Activated T-helper 2 cell treated with anti-CD3 and anti-CD28 coated beads, Interferon-gamma antibody, Interleukin-2, Interleukin-4, amounts not matched to agents 10 μg/mL and 5 μg/mL and 100 μg/mL, durations not matched to agents 14 hours and 24 hours and 36 hours (primary cell): ENCODE measurements at regions of chr12 and their contacts with region 1.

Region 1: GRCh38 chr12:92034858-92035401 is 110.7 kb downstream of the BTG1 start:
- DNase-seq: peak; percentile 35
- H3K4me3 Mint-ChIP-seq: peak overlapping the region; percentile 82
- H3K27ac Mint-ChIP-seq: peak overlapping the region; percentile 90
- H3K4me1 Mint-ChIP-seq: peaks cover 69% of the 10 kb centered on the region
- H3K27me3 Mint-ChIP-seq: no peaks in the 10 kb centered on the region

Region 2: GRCh38 chr12:91561958-91562875 is 472.7 kb before region 1 on chr12:
- intact Hi-C with region 1: loop called (anchors 10 kb)
- DNase-seq: no peak
- H3K4me3 Mint-ChIP-seq: no peak overlapping the region
- H3K27ac Mint-ChIP-seq: no peak overlapping the region
- H3K4me1 Mint-ChIP-seq: peaks cover 35% of the 10 kb centered on the region
- H3K27me3 Mint-ChIP-seq: no peaks in the 10 kb centered on the region

Region 3: GRCh38 chr12:91687052-91688017 is 347.6 kb before region 1 on chr12:
- intact Hi-C with region 1: loop called (anchors 10 kb)
- DNase-seq: no peak
- H3K4me3 Mint-ChIP-seq: no peak overlapping the region
- H3K27ac Mint-ChIP-seq: peak overlapping the region; percentile 66
- H3K4me1 Mint-ChIP-seq: peaks cover 24% of the 10 kb centered on the region
- H3K27me3 Mint-ChIP-seq: no peaks in the 10 kb centered on the region

Region 4: DNA sequence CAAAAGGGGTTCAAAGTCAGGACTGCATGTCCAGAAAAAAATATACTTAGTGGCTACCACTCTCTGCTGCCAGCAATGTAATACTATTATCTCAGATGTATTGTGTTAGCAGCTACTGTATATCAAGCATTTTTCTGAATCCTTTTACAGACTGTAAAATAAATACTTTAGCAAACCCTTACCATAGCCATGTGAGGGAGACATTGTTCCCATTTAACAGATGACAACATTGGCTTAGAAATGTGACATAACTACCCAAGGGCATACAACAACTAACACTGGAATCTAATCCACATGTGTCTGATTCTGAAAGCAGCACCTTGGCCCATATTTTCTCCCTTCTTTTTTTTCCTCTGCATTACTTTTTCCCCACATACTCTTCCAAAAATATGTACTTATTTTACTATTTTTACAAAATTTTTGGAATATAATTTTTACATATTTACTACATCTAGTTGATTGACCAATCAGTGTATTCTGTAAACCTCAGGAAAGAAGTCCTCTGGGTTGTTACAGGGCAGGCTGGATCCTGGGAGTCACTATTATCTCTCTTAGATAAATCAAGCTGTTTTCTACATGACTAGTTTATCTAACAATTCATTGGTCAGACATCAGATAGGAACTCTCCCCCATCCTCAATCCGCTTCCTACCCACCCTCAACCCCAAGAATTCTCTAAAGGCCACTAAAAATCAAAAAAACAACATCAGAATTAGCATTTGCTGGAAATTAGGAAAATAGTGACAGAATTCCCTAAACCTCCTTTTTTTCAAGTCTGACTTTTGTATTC is 43.3 kb before region 1 on chr12:
- intact Hi-C with region 1: loop called (anchors 5 kb)
- DNase-seq: no peak
- H3K4me3 Mint-ChIP-seq: no peak overlapping the region
- H3K27ac Mint-ChIP-seq: no peak overlapping the region
- H3K4me1 Mint-ChIP-seq: peaks cover 4% of the 10 kb centered on the region
- H3K27me3 Mint-ChIP-seq: no peaks in the 10 kb centered on the region

Region 5: DNA sequence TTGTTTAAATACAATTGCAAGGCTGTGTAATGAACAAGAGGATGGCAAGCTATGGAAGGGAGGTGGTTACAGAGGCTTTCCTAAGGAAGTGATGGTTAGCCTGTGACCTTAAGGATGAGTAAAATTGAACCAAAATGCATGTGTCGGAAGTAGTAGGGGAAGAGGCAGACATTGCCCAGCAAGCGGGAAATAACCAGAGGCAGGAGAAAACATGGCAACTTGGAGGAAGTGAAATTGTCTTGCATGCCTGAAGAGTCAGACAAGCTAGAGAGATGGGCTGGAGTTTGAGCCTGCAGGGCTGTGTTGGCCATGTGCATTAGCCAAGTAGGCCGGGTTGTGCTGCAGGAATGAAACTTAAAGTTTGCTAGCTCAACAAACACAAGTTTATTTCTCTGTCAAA is 14.5 kb after region 1 on chr12:
- intact Hi-C with region 1: loop called (anchors 1 kb)
- DNase-seq: no peak
- H3K4me3 Mint-ChIP-seq: no peak overlapping the region
- H3K27ac Mint-ChIP-seq: no peak overlapping the region
- H3K4me1 Mint-ChIP-seq: peaks cover 71% of the 10 kb centered on the region
- H3K27me3 Mint-ChIP-seq: no peaks in the 10 kb centered on the region

Region 6: GRCh38 chr12:92136965-92137721 is 102.2 kb after region 1 on chr12:
- intact Hi-C with region 1: loop called (anchors 2 kb)
- DNase-seq: no peak
- H3K4me3 Mint-ChIP-seq: peak overlapping the region; percentile 98
- H3K27ac Mint-ChIP-seq: peak overlapping the region; percentile 87
- H3K4me1 Mint-ChIP-seq: peaks cover 78% of the 10 kb centered on the region
- H3K27me3 Mint-ChIP-seq: no peaks in the 10 kb centered on the region